Panc1 (cell line): ENCODE measurements at regions of chr2 and their contacts with region 1.

Region 1: DNA sequence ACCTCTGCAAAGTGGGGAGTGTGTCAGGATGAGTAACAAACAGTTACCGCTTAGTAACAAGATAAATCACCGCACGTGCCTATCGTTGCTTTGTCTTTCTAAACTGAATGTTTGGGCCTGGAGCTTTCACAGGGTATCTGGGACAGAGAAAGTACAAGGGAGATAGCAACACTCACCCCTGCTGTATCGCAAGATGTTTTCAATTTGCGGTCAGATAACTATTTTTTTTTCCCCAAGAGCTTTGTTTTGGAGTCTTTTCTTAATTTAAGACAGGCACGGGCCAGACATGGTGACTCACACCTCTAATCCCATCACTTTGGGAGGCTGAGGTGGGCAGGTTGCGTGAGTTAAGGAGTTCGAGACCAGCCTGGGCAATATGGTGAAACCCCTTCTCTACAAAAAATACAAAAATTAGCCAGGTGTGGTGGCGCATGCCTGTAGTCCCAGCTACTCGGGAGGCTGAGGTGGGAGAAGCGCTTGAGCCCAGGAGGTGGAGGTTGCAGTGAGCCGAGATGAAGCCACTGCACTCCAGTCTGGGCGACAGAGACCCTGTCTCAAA is 146.6 kb downstream of the GBX2 start:
- DNase-seq: no peak
- ATAC-seq: no peak
- H3K4me3 ChIP-seq: no peak overlapping the region
- H3K27ac ChIP-seq: no peak overlapping the region
- H3K4me1 ChIP-seq: no peaks in the 10 kb centered on the region
- H3K27me3 ChIP-seq: no peaks in the 10 kb centered on the region
- CTCF ChIP-seq: no peak

Region 2: DNA sequence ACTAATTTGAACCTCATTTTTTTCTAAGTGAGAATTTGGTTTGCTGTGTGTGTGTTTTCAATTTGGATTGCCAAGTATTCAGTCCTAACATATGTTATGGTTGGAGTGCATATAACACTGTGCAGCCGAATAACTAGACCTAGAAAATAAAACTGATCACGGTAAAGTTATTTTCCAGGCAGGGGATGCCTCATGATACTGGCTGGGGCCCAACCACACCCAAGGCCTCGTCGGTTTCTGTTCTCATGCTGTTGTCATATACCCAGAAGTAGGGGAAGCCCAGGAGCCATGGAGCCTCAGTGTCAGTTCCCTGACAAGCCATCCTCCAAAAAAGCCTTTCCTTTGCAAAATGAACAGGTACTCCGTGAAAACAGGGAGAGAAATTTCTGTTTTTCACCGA is 13.6 kb before region 1 on chr2:
- CTCF ChIA-PET with region 1: interaction called, 20 read pairs
- POLR2A ChIA-PET with region 1: no interaction called
- in situ Hi-C with region 1: no loop called
- intact Hi-C with region 1: no loop called
- DNase-seq: no peak
- ATAC-seq: no peak
- H3K4me3 ChIP-seq: no peak overlapping the region
- H3K27ac ChIP-seq: no peak overlapping the region
- H3K4me1 ChIP-seq: no peaks in the 10 kb centered on the region
- H3K27me3 ChIP-seq: no peaks in the 10 kb centered on the region
- CTCF ChIP-seq: no peak

Region 3: GRCh38 chr2:236264256-236264655 is 242.7 kb after region 1 on chr2 and contains the start of gene ASB18:
- CTCF ChIA-PET with region 1: no interaction called
- POLR2A ChIA-PET with region 1: no interaction called
- in situ Hi-C with region 1: no loop called
- intact Hi-C with region 1: no loop called
- DNase-seq: no peak
- ATAC-seq: no peak
- H3K4me3 ChIP-seq: no peak within 1 kb of the TSS
- H3K27ac ChIP-seq: no peak within 1 kb of the TSS
- H3K4me1 ChIP-seq: no peaks in the 10 kb centered on the region
- H3K27me3 ChIP-seq: no peaks in the 10 kb centered on the region
- CTCF ChIP-seq: no peak
- total RNA-seq, gene ASB18: not detected